ENCODE measurements at regions of chr14 and their contacts with region 1.

Region 1: DNA sequence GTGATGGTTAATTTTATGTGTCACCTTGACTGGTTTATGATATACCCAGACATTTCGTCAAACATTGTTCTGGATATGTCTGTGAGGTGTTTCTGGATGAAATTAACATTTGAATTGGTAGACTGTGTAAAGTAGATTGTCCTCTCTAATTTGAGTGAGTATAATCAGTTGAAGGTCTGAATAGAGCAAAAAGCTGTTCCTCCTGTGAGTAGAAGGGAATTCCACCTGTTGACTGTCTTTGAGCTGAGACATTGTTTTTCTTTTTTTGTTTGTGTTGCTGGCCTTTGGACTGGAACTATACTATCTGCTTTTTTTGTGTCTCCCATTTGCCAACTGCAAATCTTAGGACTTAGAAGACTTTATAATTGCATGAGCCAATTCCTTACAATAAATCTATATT is 920.9 kb upstream of the LRFN5 start:
- DNase-seq: no peak
- ATAC-seq: no peak
- H3K4me3 ChIP-seq: no peak overlapping the region
- H3K27ac ChIP-seq: no peak overlapping the region
- H3K4me1 ChIP-seq: no peaks in the 10 kb centered on the region
- H3K27me3 ChIP-seq: no peaks in the 10 kb centered on the region
- CTCF ChIP-seq: no peak
- EP300 ChIP-seq: no peak
- POLR2A ChIP-seq: no peak
- RAD21 ChIP-seq: no peak

Region 2: DNA sequence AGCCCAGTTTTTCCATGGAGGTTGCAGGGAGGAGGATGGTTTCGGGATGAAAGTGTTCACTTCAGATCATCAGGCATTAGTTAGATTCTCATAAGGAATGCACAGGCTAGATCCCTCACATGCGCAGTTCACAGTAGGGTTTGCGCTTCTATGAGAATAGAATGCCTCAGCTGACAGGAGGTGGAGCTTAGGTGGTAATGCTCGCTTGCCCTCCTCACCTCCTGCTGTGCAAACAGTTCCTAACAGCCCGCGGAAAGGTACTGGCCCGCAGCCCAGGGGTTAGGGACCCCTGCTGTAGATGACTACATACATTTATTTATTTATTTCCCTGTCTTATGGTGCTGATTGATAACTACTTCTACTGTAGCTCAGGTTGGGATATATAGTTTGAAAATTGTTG is 1346.8 kb before region 1 on chr14:
- CTCF ChIA-PET with region 1: no interaction called
- POLR2A ChIA-PET with region 1: no interaction called
- in situ Hi-C with region 1: no loop called
- intact Hi-C with region 1: loop called (anchors 5 kb)
- DNase-seq: peak; percentile 50
- ATAC-seq: peak; percentile 56
- H3K4me3 ChIP-seq: no peak overlapping the region
- H3K27ac ChIP-seq: no peak overlapping the region
- H3K4me1 ChIP-seq: peaks cover 5% of the 10 kb centered on the region; the same call in 1 of the 2 replicates
- H3K27me3 ChIP-seq: no peaks in the 10 kb centered on the region
- CTCF ChIP-seq: no peak
- EP300 ChIP-seq: no peak
- POLR2A ChIP-seq: no peak
- RAD21 ChIP-seq: no peak

Measured in HepG2 (cell line).